PC-9 (cell line): ENCODE measurements at regions of chr9 and their contacts with region 1.

Region 1: DNA sequence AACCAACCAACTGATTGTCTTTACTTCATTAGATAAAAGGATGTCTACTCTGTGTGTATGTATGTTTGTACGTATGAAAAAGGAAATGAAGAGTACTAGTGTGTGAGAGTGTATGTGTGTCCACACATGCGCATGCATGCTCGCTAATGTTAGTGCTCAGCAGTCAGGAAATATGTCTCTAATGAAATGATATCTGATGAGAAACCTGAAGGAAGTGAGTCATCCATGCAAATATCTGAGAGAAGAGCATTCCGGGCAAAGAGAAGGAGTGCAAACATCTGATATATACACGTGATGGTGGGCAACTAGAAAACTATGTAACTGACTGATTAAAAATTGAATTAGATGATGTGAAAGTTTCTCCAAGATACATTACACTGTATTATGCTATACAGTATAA is 29.6 kb upstream of the UGCG start:
- DNase-seq: peak in 1 of 2 experiments; percentile 45
- H3K4me3 ChIP-seq: no peak overlapping the region
- H3K27ac ChIP-seq: no peak overlapping the region
- H3K4me1 ChIP-seq: peaks cover 11% of the 10 kb centered on the region
- H3K27me3 ChIP-seq: no peaks in the 10 kb centered on the region
- CTCF ChIP-seq: no peak

Region 2: GRCh38 chr9:111783857-111784256 is 83.1 kb before region 1 on chr9:
- CTCF ChIA-PET with region 1: interaction called, 10 read pairs
- POLR2A ChIA-PET with region 1: interaction called, 3 read pairs
- intact Hi-C with region 1: no loop called
- DNase-seq: no peak
- H3K4me3 ChIP-seq: no peak overlapping the region
- H3K27ac ChIP-seq: no peak overlapping the region
- H3K4me1 ChIP-seq: no peaks in the 10 kb centered on the region
- H3K27me3 ChIP-seq: no peaks in the 10 kb centered on the region
- CTCF ChIP-seq: no peak